CD4-positive, alpha-beta T cell (primary cell): ENCODE measurements at regions of chr4 and their contacts with region 1.

Region 1: GRCh38 chr4:140153718-140154571 is at the start of gene MAML3:
- DNase-seq: peak; percentile 71 to 92 (median 81)
- ATAC-seq: peak; percentile 23
- H3K4me3 ChIP-seq: peak within 1 kb of the TSS; percentile 60
- H3K4me3 Mint-ChIP-seq: peak within 1 kb of the TSS; percentile 97
- H3K27ac ChIP-seq: peak within 1 kb of the TSS in 1 of 2 donors; percentile 89
- H3K27ac Mint-ChIP-seq: peak within 1 kb of the TSS; percentile 97
- H3K4me1 ChIP-seq: peaks cover 51% of the 10 kb centered on the region
- H3K4me1 Mint-ChIP-seq: peaks cover 45% of the 10 kb centered on the region
- H3K27me3 ChIP-seq: no peaks in the 10 kb centered on the region
- H3K27me3 Mint-ChIP-seq: no peaks in the 10 kb centered on the region
- CTCF ChIP-seq: no peak
- total RNA-seq, gene MAML3: 2.5 to 2.9 TPM

Region 2: DNA sequence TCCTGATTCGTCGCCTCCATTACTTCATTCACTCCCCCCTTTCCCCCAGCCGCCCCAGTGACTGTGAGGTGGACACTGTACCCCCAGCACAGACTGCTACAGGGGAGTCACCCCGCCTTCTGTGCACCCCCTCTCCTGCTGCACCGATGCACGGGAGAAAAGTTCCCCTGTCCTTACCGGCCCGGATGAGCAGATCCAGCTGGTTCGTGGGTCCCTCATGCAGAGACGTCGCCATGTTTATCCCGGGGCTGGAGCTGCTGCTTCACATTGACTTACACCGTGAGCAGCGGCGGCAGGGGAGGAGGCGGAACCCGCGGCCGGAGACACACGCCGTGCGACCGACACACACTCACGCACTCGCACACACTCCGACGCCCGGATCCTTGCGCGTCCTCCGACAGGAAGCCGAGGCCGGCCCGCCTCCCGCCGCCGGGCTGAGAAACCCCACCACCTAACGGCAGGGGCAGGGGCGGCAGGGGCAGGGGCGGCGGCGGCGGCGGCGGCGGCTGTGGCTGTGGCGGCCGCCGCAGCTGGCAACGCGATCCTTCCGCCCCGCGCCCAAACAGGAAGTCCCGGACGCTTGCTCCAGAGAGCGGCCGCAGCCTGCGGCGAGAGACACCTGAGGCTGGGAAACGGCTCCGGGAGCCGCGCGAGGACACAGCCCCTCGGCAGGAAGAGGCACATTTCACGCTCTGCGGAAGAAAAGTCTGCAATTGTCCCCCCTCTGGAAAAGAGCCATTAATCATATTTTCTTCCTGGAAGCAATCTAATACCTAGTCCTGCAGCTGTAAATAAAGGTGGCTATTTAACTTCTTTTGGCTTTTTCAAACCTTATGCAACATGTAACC is 1069.8 kb before region 1 on chr4:
- CTCF ChIA-PET with region 1: no interaction called
- POLR2A ChIA-PET with region 1: no interaction called
- intact Hi-C with region 1: loop called in 1 of 2 experiments (anchors 2 kb)
- DNase-seq: peak; percentile 65 to 94 (median 80)
- ATAC-seq: peak; percentile 44
- H3K4me3 ChIP-seq: peak overlapping the region; percentile 93
- H3K4me3 Mint-ChIP-seq: peak overlapping the region; percentile 93
- H3K27ac ChIP-seq: peak overlapping the region; percentile 94 to 96
- H3K27ac Mint-ChIP-seq: peak overlapping the region; percentile 92
- H3K4me1 ChIP-seq: peaks cover 5% of the 10 kb centered on the region
- H3K4me1 Mint-ChIP-seq: peaks cover 55% of the 10 kb centered on the region
- H3K27me3 ChIP-seq: no peaks in the 10 kb centered on the region
- H3K27me3 Mint-ChIP-seq: no peaks in the 10 kb centered on the region
- CTCF ChIP-seq: no peak

Region 3: DNA sequence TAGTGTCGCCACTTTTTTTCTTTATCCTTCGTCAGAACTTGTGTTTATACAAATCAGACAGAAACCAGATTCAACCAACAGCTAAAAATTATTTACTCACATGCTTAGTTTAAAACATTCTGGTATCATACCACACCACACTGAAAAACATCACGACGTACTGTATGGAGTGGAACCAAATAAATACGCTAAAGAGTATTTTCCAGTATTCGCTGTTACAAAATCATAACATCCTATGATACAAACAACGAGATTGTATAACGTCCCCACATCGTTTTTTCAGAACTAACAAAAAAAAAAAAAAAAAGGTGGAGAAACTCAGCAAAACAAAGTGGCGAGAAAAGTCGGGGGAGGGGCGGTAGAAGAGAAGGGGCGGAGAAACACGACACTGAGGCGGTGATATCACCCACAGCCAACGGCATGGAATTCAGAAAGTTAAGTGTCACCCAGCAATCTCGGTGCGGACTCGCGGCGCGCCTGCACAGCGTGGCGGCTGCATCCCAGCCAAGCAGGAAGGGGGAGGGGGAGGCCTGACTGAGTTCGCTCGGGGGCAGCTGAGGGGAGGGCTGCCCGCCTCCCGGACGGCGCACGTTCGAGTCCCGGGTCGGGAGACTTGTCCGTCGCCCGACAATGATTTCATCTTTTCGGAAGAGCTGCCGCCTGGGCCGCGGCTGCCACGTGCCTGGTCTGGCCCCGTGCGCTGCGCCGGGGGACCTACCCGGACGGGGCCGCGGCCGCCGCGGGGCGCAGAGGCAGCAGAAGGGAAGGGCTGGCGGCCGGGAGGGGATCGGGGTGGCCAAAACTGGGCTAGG is 598.8 kb before region 1 on chr4:
- CTCF ChIA-PET with region 1: no interaction called
- POLR2A ChIA-PET with region 1: interaction called, 16 read pairs
- intact Hi-C with region 1: loop called in 1 of 2 experiments (anchors 10 kb)
- DNase-seq: peak; percentile 72 to 94 (median 84)
- ATAC-seq: peak; percentile 78
- H3K4me3 ChIP-seq: peak overlapping the region; percentile 96
- H3K4me3 Mint-ChIP-seq: peak overlapping the region; percentile 95
- H3K27ac ChIP-seq: peak overlapping the region; percentile 40 to 74
- H3K27ac Mint-ChIP-seq: peak overlapping the region; percentile 95
- H3K4me1 ChIP-seq: peaks cover 40% of the 10 kb centered on the region
- H3K4me1 Mint-ChIP-seq: peaks cover 67% of the 10 kb centered on the region
- H3K27me3 ChIP-seq: no peaks in the 10 kb centered on the region
- H3K27me3 Mint-ChIP-seq: peaks cover 9% of the 10 kb centered on the region
- CTCF ChIP-seq: no peak

Region 4: DNA sequence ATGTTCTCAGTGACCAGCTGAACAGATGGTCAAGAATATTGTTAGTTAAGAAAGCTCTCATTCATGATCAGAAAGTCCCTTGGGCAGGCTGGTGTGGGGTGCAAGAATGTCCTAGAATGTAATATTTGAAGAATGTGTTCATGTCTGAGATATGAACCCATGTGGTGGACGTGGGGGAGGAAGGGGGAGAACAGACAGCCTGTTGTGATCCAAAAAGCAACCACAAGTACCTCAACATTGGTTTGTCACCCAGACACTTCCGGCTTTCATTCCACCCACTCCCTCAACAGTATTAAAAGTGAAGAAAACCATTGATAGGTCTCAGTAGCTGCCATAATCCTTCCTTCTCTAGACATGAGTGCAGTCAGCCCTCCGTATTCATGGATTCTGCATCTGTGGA is 82.1 kb before region 1 on chr4:
- CTCF ChIA-PET with region 1: interaction called, 3 read pairs
- POLR2A ChIA-PET with region 1: interaction called, 58 read pairs
- intact Hi-C with region 1: loop called (anchors 1 to 5 kb)
- DNase-seq: peak; percentile 33 to 86 (median 53)
- ATAC-seq: peak; percentile 93
- H3K4me3 ChIP-seq: peak overlapping the region; percentile 19
- H3K4me3 Mint-ChIP-seq: peak overlapping the region; percentile 85
- H3K27ac ChIP-seq: no peak overlapping the region
- H3K27ac Mint-ChIP-seq: peak overlapping the region; percentile 94
- H3K4me1 ChIP-seq: peaks cover 35% of the 10 kb centered on the region
- H3K4me1 Mint-ChIP-seq: peaks cover 46% of the 10 kb centered on the region
- H3K27me3 ChIP-seq: no peaks in the 10 kb centered on the region
- H3K27me3 Mint-ChIP-seq: no peaks in the 10 kb centered on the region
- CTCF ChIP-seq: no peak

Region 5: GRCh38 chr4:140243278-140243753 is 89.4 kb after region 1 on chr4:
- CTCF ChIA-PET with region 1: no interaction called
- POLR2A ChIA-PET with region 1: interaction called, 12 read pairs
- intact Hi-C with region 1: no loop called
- DNase-seq: peak in 7 of 14 experiments; percentile 9 to 41 (median 36)
- ATAC-seq: peak; percentile 68
- H3K4me3 ChIP-seq: no peak overlapping the region
- H3K4me3 Mint-ChIP-seq: peak overlapping the region; percentile 49
- H3K27ac ChIP-seq: no peak overlapping the region
- H3K27ac Mint-ChIP-seq: peak overlapping the region; percentile 69
- H3K4me1 ChIP-seq: peaks cover 18% of the 10 kb centered on the region
- H3K4me1 Mint-ChIP-seq: peaks cover 29% of the 10 kb centered on the region
- H3K27me3 ChIP-seq: no peaks in the 10 kb centered on the region
- H3K27me3 Mint-ChIP-seq: no peaks in the 10 kb centered on the region
- CTCF ChIP-seq: no peak

Region 6: GRCh38 chr4:140300271-140300970 is 146.5 kb after region 1 on chr4:
- CTCF ChIA-PET with region 1: no interaction called
- POLR2A ChIA-PET with region 1: no interaction called
- intact Hi-C with region 1: no loop called
- DNase-seq: peak in 2 of 14 experiments; percentile 9 to 22
- ATAC-seq: no peak
- H3K4me3 ChIP-seq: no peak overlapping the region
- H3K4me3 Mint-ChIP-seq: no peak overlapping the region
- H3K27ac ChIP-seq: no peak overlapping the region
- H3K27ac Mint-ChIP-seq: no peak overlapping the region
- H3K4me1 ChIP-seq: no peaks in the 10 kb centered on the region
- H3K4me1 Mint-ChIP-seq: no peaks in the 10 kb centered on the region
- H3K27me3 ChIP-seq: no peaks in the 10 kb centered on the region
- H3K27me3 Mint-ChIP-seq: no peaks in the 10 kb centered on the region
- CTCF ChIP-seq: no peak

Region 7: DNA sequence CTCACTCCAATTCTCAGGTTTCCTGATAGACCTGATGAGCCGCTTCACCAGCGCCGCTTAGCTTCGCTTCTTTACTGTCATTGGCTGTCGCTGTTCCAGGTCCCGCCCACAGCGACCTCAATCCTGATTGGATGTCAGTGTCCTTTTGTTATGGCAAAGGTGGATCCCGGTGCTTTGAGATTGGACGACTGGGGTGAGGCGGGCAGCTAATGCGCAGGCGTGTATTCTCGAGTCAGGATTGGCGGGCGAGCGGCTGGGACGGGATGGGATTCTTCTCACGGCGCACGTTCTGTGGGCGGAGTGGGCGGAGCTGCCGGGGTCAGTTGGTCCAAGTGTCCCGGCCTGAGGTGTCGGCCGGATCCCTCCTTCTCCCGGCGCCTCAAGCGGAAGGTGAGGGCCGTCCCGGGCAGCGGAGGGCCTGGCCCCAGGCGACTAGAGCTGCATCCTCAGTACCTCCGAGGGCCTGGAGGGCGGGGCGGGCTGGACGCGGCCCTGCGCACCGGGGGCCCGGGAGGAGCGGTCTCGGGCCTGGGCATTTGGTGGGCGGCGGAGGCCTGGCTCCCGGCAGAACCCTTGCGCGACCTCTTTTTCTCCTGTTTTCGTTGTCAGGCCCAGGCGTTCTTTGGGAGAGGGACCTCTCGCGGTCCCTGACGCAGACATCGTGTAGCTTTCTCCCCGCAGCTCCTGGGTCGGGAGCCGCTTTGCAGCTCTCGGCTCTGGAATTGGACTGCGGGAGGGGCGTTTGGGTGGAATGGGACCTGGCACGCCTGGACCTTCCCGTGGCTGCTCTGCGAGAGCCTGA is 219.6 kb after region 1 on chr4 and contains the start of gene SCOC:
- CTCF ChIA-PET with region 1: no interaction called
- POLR2A ChIA-PET with region 1: interaction called, 7 read pairs
- intact Hi-C with region 1: loop called in 1 of 2 experiments (anchors 5 kb)
- DNase-seq: peak; percentile 90 to 98 (median 94)
- ATAC-seq: peak; percentile 95
- H3K4me3 ChIP-seq: peak within 1 kb of the TSS; percentile 94
- H3K4me3 Mint-ChIP-seq: peak within 1 kb of the TSS; percentile 87
- H3K27ac ChIP-seq: peak within 1 kb of the TSS; percentile 65 to 83
- H3K27ac Mint-ChIP-seq: no peak within 1 kb of the TSS
- H3K4me1 ChIP-seq: peaks cover 14% of the 10 kb centered on the region
- H3K4me1 Mint-ChIP-seq: peaks cover 32% of the 10 kb centered on the region
- H3K27me3 ChIP-seq: no peaks in the 10 kb centered on the region
- H3K27me3 Mint-ChIP-seq: no peaks in the 10 kb centered on the region
- CTCF ChIP-seq: no peak
- total RNA-seq, gene SCOC: 5.9 to 6.8 TPM

Region 8: GRCh38 chr4:140439644-140440142 is 285.7 kb after region 1 on chr4:
- CTCF ChIA-PET with region 1: no interaction called
- POLR2A ChIA-PET with region 1: no interaction called
- intact Hi-C with region 1: no loop called
- DNase-seq: no peak
- ATAC-seq: no peak
- H3K4me3 ChIP-seq: no peak overlapping the region
- H3K4me3 Mint-ChIP-seq: no peak overlapping the region
- H3K27ac ChIP-seq: no peak overlapping the region
- H3K27ac Mint-ChIP-seq: no peak overlapping the region
- H3K4me1 ChIP-seq: no peaks in the 10 kb centered on the region
- H3K4me1 Mint-ChIP-seq: no peaks in the 10 kb centered on the region
- H3K27me3 ChIP-seq: no peaks in the 10 kb centered on the region
- H3K27me3 Mint-ChIP-seq: no peaks in the 10 kb centered on the region
- CTCF ChIP-seq: no peak